ENCODE measurements at regions of chr12 and their contacts with region 1.

Region 1: DNA sequence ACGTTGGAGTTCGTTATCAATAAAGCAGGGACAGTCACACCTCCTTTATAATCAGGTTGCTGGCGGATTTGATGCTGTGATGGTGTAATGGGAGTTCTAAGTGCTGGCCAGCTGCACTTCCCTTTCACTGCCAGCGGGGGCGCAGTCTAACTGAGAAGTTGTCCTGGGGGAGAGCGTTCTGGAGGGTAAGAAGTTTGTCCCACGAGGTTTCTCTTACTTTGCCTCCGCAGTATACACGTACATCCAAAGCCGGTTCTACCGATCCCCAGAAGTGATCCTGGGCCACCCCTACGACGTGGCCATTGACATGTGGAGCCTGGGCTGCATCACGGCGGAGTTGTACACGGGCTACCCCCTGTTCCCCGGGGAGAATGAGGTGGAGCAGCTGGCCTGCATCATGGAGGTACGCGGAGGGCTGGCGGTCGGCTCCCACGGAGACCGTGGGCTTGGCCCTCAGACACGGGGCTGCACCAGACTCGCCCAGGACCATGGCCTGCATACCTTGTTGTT is 42.7 kb downstream of the DYRK4 start:
- DNase-seq: peak; percentile 89
- ATAC-seq: peak; percentile 98
- H3K4me3 Mint-ChIP-seq: peak overlapping the region; percentile 93
- H3K27ac Mint-ChIP-seq: peak overlapping the region; percentile 86
- H3K4me1 Mint-ChIP-seq: peaks cover 11% of the 10 kb centered on the region
- H3K27me3 Mint-ChIP-seq: peaks cover 18% of the 10 kb centered on the region

Region 2: GRCh38 chr12:4308334-4308968 is 296.3 kb before region 1 on chr12:
- CTCF ChIA-PET with region 1: no interaction called
- POLR2A ChIA-PET with region 1: no interaction called
- DNase-seq: no peak
- ATAC-seq: no peak
- H3K4me3 Mint-ChIP-seq: no peak overlapping the region
- H3K27ac Mint-ChIP-seq: peak overlapping the region; percentile 47
- H3K4me1 Mint-ChIP-seq: peaks cover 5% of the 10 kb centered on the region
- H3K27me3 Mint-ChIP-seq: no peaks in the 10 kb centered on the region

Region 3: DNA sequence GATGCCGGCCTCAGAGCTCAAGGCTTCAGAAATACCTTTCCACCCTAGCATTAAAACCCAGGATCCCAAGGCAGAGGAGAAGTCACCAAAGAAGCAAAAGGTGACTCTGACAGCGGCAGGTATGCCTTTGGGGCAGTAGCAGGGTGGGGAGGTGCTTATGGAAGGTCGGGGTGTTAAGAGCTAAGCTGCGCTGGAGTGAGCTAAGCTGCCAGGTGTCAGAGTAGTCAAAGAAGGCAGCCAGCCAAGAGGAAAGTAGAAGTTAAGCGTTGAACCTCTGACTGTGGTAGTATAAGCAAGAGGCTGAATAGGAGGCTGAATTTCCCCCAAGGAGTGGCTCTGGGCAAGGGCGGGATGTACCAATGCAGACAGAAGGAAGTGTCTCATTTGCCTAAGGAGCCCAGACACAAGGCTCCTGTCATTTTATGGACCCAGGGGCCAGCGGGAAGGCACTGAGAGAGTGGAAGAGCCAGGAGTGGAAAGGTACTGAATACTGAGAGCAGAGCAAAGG is 13.5 kb before region 1 on chr12:
- CTCF ChIA-PET with region 1: interaction called, 10 read pairs
- POLR2A ChIA-PET with region 1: no interaction called
- DNase-seq: no peak
- ATAC-seq: no peak
- H3K4me3 Mint-ChIP-seq: no peak overlapping the region
- H3K27ac Mint-ChIP-seq: no peak overlapping the region
- H3K4me1 Mint-ChIP-seq: no peaks in the 10 kb centered on the region
- H3K27me3 Mint-ChIP-seq: peaks cover 4% of the 10 kb centered on the region

Region 4: DNA sequence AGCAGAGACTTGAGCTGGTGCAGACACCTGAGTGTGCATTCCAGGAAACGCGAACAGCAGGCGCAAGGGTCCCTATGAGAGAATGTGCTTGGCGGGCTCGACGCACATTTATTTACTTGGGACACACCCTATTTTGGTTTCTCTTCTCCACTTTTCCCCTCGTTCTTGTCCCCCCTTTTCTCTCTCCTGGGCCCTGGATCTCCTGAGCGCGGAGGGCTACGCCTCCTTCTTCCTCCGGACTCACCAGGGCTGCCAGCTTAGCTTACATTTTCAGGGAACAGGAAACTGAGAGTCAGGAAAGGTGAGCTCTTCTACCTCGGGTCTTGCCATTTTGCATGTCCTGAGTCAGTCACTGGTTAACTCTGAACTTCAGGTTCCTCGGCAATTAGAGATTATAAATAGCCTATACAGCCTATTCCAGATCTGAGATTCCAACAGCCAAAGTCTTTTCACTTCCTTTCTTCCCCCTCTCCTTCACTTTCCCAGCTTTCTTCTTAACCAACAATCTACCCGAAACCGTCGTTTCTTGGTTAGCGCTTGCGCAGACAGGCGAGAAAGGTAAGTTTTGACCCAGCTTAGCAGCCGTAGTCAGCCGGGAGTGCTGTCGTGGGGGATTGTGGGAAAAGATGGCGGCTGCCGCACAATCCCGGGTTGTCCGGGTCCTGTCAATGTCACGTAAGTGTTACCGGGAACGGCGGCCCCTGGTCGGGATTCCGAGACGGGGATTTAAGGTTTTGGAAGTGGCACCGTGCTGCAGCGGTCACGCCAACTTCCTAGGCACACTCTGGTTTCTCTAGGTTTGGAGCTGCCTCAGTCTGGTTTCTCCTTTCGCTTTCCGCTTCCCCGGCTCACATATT is 44.0 kb after region 1 on chr12 and contains the starts of genes AKAP3 and NDUFA9:
- CTCF ChIA-PET with region 1: interaction called, 15 read pairs
- POLR2A ChIA-PET with region 1: no interaction called
- DNase-seq: peak; percentile 89
- ATAC-seq: peak; percentile 98
- H3K4me3 Mint-ChIP-seq: peak within 1 kb of the TSS; percentile 98
- H3K27ac Mint-ChIP-seq: peak within 1 kb of the TSS; percentile 97
- H3K4me1 Mint-ChIP-seq: peaks cover 43% of the 10 kb centered on the region
- H3K27me3 Mint-ChIP-seq: no peaks in the 10 kb centered on the region
- total RNA-seq, gene AKAP3: 2.6 to 2.8 TPM
- total RNA-seq, gene NDUFA9: 112 to 120 TPM